ENCODE measurements at regions of chr17 and their contacts with region 1.

Region 1: DNA sequence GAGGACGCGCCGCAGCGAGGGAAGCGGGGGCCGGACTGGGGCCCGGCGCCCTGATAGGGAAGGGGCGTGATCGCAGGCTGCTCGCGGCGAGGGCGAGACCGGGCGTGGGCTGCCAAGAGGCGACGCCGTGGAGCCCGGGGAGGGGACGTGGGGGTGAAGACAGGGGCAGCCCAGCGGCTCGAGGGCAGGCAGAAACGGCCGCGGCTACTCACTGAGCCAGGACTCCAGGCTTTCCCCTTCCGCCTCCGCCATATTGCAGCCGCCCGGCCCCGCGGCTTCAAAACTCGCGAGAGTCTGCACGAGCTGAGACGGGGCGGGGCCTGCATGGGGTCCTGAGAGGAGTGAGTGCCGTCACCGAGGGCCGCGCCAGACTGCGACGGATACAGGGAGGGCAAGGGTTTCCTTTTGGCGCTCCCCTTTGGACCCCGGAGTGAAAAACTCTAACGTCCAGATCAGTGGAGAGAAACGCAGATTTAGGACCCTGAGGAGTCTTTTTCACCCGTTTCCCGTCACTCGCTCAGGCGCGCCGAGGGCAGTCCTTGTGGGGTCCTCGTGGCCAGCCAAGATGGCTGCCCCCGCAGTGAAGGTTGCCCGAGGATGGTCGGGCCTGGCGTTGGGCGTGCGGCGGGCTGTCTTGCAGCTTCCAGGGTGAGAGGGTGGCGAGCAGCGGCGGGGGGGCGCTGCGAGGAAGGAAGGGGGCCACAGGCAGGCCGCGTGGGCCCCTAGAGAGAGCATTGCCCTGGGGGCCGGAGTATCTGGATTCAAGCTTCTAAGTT is at the starts of genes GGA3 and MRPS7:
- DNase-seq: peak; percentile 91 to 100 (median 95)
- ATAC-seq: peak; percentile 91 to 94
- H3K4me3 Mint-ChIP-seq: peak within 1 kb of the TSS; percentile 91 to 99 (median 97)
- H3K27ac Mint-ChIP-seq: peak within 1 kb of the TSS; percentile 100
- H3K4me1 Mint-ChIP-seq: peaks cover 29 to 65% (median 60%) of the 10 kb centered on the region in 4 donors
- H3K27me3 Mint-ChIP-seq: no peaks in the 10 kb centered on the region
- polyA plus RNA-seq, gene GGA3: 6.2 to 20.1 (median 14.7) TPM
- polyA plus RNA-seq, gene MRPS7: 113 to 132 (median 122) TPM

Region 2: GRCh38 chr17:74873038-74873873 is 388.3 kb before region 1 on chr17:
- POLR2A ChIA-PET with region 1: no interaction called
- DNase-seq: peak; percentile 97 to 100 (median 99)
- ATAC-seq: peak; percentile 95 to 96
- H3K4me3 Mint-ChIP-seq: peak overlapping the region; percentile 83 to 98 (median 94)
- H3K27ac Mint-ChIP-seq: peak overlapping the region; percentile 92 to 99 (median 98)
- H3K4me1 Mint-ChIP-seq: peaks cover 16 to 25% (median 23%) of the 10 kb centered on the region in 4 donors
- H3K27me3 Mint-ChIP-seq: no peaks in the 10 kb centered on the region

Region 3: DNA sequence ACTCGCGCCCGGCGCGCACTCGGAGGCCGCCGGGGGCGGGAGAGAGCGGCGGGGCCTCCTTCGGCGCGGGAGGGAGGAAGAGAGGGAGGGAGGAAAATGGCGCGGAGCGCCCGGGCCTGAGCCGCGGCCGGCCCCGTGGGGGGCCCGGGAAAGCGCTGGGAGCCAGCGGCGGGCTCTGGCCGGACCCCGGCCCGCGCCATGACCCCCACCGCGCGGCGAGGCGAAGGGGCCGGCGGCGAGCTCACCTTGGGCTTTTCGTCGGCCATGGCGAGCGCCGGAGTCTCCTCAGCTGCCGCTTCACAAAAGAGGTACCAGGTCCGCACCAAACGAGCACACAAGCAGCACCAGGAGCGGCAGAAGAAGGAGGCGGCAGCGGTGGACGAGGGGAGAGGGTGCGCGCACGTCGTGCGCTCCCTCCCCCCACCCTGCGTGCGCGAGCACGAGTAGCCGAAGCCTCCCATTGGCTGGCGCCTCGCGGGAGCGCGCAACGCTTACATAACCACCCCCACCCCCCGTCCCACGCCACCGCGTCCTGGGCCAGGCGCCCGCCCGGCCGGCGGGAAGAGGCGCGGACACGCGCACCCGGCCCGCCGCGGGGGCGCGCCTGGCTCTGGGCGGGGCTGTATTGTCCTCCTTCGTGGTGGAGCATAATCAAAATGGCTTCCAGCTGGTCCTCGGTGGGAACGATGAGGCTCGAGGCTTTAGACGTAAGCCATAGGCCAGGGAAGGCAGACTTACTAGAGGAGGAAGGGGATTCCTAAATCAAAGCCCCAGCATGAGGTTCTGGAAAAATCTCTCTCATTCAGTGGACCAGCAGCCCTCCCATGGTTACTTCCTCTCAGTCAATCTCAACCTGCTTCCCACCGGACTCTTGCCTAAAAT is 78.7 kb before region 1 on chr17 and contains the start of gene SUMO2:
- POLR2A ChIA-PET with region 1: interaction called, 12 read pairs
- DNase-seq: peak; percentile 91 to 96 (median 94)
- ATAC-seq: peak; percentile 80 to 84
- H3K4me3 Mint-ChIP-seq: peak within 1 kb of the TSS; percentile 88 to 97 (median 92)
- H3K27ac Mint-ChIP-seq: peak within 1 kb of the TSS; percentile 89 to 99 (median 98)
- H3K4me1 Mint-ChIP-seq: peaks cover 15 to 53% (median 39%) of the 10 kb centered on the region in 4 donors
- H3K27me3 Mint-ChIP-seq: no peaks in the 10 kb centered on the region
- polyA plus RNA-seq, gene SUMO2: 293 to 381 (median 325) TPM

Region 4: DNA sequence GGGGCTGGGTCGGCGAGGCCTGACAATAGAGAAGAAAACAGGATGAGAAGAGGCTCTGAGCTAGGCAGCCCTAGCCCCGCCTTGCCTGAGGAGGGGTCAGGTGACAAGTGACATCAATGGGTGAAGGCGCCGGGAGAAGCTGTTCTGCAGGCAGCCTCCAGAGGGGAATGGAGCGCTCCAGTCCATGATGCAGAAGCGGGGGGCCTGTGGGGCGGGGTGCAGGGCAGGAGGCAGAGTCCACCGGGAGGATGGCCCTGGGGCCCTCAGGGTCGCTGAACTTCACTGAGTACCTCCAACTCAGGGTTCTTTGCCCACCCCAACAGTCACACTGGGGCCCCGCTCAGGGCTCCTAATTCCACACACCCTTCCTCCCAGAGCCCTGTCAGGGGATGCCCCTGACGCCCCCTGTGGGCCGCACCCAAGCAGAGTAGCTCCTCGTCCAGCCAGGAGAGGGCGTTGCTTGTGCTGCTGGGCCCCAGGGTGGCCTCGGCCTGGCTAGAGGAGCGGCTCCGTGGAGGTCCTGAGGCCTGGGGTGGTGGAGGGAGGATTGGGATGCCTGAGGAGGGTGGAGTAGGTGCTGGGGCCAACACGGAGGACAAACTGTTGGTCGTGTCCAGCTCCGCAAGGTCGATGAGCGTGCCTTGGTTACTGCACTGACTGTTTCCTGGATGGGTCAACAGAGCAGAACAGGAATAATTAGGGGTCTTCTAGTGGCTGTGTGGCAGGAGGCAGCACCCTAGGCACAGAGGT is 21.0 kb before region 1 on chr17:
- POLR2A ChIA-PET with region 1: interaction called, 14 read pairs
- DNase-seq: peak in 5 of 10 donors; percentile 12 to 30 (median 24)
- ATAC-seq: peak; percentile 43 to 51
- H3K4me3 Mint-ChIP-seq: no peak overlapping the region
- H3K27ac Mint-ChIP-seq: peak overlapping the region in 5 of 10 donors; percentile 25 to 74 (median 47)
- H3K4me1 Mint-ChIP-seq: peaks cover 7 to 27% (median 18%) of the 10 kb centered on the region in 4 donors
- H3K27me3 Mint-ChIP-seq: no peaks in the 10 kb centered on the region

Region 5: DNA sequence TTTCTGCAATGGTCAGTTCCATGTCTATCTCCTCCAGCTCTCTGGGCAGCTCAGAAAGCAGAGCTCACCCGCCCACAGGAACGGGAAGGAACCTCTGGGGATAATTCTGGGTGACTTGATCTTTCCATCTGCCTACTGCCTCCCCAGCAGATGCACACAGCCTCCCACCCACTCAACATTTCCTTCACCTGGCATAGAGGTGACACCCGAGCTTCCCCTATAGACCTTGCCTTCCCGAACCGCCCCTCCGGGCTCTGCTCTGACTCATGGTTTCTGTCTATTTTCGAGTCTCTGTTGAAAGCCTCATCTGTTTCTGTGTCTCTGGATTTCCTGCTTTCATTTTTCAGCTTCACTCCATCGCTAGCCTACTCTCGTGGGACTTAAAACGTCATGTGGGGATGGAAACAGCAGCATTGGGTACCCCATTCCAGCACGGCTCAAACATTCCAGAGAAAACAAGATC is 11.5 kb before region 1 on chr17:
- POLR2A ChIA-PET with region 1: interaction called, 10 read pairs
- DNase-seq: peak in 3 of 10 donors; percentile 22 to 40 (median 23)
- ATAC-seq: peak; percentile 79 to 91
- H3K4me3 Mint-ChIP-seq: peak overlapping the region; percentile 37 to 79 (median 64)
- H3K27ac Mint-ChIP-seq: peak overlapping the region; percentile 70 to 96 (median 92)
- H3K4me1 Mint-ChIP-seq: peaks cover 41 to 57% (median 54%) of the 10 kb centered on the region in 4 donors
- H3K27me3 Mint-ChIP-seq: no peaks in the 10 kb centered on the region

Region 6: DNA sequence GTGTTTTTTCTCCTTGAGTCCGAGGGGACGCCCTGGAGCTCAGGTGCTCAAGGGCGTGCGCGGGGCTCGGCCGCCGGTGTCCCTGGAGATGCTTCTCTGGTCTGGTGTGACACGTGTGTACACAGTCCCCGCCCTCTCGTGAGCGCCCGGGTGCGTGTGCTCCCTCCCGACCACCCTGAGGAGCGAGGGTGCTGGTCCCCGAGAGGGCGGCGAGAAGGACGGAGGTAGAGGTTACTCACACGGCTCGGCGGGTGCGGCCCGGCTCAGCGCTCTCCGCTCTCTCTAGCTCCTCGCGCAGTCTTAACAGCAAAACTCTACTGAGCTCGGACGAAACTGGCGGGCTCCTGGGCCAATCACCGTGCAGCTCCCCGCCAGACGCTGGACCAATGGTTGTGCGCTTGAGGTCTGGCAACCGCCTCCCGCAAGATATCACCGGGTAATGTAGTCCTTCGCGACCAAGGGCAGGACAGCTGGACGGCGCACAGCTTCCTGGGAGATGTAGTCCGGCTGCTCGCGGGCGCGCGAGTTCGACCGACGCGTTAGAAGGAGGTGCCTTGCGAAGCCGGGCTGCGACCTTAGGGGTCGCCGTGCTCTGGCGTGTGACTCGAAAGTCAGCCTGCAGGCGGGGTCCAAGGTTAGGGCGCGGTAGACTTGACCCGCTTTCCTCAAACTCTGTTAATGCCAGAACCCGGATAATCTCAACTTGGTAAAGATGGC is 27.7 kb after region 1 on chr17 and contains the start of gene SLC25A19:
- POLR2A ChIA-PET with region 1: interaction called, 59 read pairs
- DNase-seq: peak; percentile 86 to 99 (median 96)
- ATAC-seq: peak; percentile 90 to 92
- H3K4me3 Mint-ChIP-seq: peak within 1 kb of the TSS; percentile 95 to 100 (median 100)
- H3K27ac Mint-ChIP-seq: peak within 1 kb of the TSS; percentile 98 to 100 (median 100)
- H3K4me1 Mint-ChIP-seq: peaks cover 10 to 24% (median 19%) of the 10 kb centered on the region in 4 donors
- H3K27me3 Mint-ChIP-seq: no peaks in the 10 kb centered on the region
- polyA plus RNA-seq, gene SLC25A19: 11.2 to 15.4 (median 13.3) TPM

Region 7: GRCh38 chr17:75335315-75335714 is 73.8 kb after region 1 on chr17:
- POLR2A ChIA-PET with region 1: no interaction called
- DNase-seq: no peak
- ATAC-seq: no peak
- H3K4me3 Mint-ChIP-seq: peak overlapping the region in 4 of 10 donors; percentile 1 to 78 (median 10)
- H3K27ac Mint-ChIP-seq: peak overlapping the region; percentile 25 to 95 (median 90)
- H3K4me1 Mint-ChIP-seq: peaks cover 29 to 84% (median 72%) of the 10 kb centered on the region in 4 donors
- H3K27me3 Mint-ChIP-seq: no peaks in the 10 kb centered on the region

Region 8: DNA sequence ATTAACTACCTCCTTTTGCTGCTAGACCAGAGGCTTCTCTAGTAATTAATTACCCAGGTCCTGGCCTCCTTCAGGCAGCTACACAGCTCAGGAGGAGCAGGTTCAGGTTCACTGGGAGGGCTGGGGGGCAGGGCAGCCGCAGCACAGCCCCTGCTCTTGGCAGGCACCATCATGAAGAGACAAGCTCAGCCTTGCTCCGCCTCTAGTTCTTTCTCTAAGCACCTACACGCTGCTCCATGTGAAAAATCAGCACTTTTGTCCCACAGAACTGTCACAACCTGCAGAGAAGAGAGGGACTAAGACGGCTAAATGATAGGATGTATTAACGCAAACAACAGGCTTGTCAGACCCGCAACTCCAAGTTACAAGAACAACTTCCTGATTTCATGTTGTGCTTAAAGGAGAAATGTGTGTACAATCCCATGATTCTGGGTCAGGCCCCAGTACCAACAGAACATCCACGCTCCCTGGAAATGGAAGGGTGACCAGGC is 90.6 kb after region 1 on chr17:
- POLR2A ChIA-PET with region 1: no interaction called
- DNase-seq: no peak
- ATAC-seq: peak; percentile 43 to 71
- H3K4me3 Mint-ChIP-seq: peak overlapping the region in 6 of 10 donors; percentile 15 to 39 (median 22)
- H3K27ac Mint-ChIP-seq: peak overlapping the region in 9 of 10 donors; percentile 26 to 91 (median 61)
- H3K4me1 Mint-ChIP-seq: peaks cover 46 to 82% (median 75%) of the 10 kb centered on the region in 4 donors
- H3K27me3 Mint-ChIP-seq: no peaks in the 10 kb centered on the region